Mammary epithelial cell (primary cell): ENCODE measurements at regions of chr14 and their contacts with region 1.

Region 1: GRCh38 chr14:64671591-64671990 is 32.6 kb upstream of the PLEKHG3 start:
- DNase-seq: peak; percentile 60
- H3K4me3 ChIP-seq: no peak overlapping the region
- H3K27ac ChIP-seq: no peak overlapping the region
- H3K4me1 ChIP-seq: peaks cover 27% of the 10 kb centered on the region
- H3K27me3 ChIP-seq: no peaks in the 10 kb centered on the region
- CTCF ChIP-seq: peak; percentile 72 to 82

Region 2: GRCh38 chr14:64708148-64709004 is 36.8 kb after region 1 on chr14:
- CTCF ChIA-PET with region 1: no interaction called
- dilution Hi-C with region 1: no loop called
- in situ Hi-C with region 1: no loop called
- intact Hi-C with region 1: loop called (anchors 5 kb)
- DNase-seq: peak; percentile 89
- H3K4me3 ChIP-seq: peak overlapping the region; percentile 23 to 39 (median 31)
- H3K27ac ChIP-seq: peak overlapping the region; percentile 86
- H3K4me1 ChIP-seq: peaks cover 47% of the 10 kb centered on the region
- H3K27me3 ChIP-seq: no peaks in the 10 kb centered on the region
- CTCF ChIP-seq: no peak

Region 3: GRCh38 chr14:64758691-64759584 is 87.3 kb after region 1 on chr14:
- CTCF ChIA-PET with region 1: no interaction called
- dilution Hi-C with region 1: loop called (anchors 5 kb)
- in situ Hi-C with region 1: loop called (anchors 5 kb)
- intact Hi-C with region 1: loop called (anchors 1 kb)
- DNase-seq: peak; percentile 82
- H3K4me3 ChIP-seq: no peak overlapping the region
- H3K27ac ChIP-seq: peak overlapping the region; percentile 68
- H3K4me1 ChIP-seq: peaks cover 78% of the 10 kb centered on the region
- H3K27me3 ChIP-seq: no peaks in the 10 kb centered on the region
- CTCF ChIP-seq: no peak

Region 4: DNA sequence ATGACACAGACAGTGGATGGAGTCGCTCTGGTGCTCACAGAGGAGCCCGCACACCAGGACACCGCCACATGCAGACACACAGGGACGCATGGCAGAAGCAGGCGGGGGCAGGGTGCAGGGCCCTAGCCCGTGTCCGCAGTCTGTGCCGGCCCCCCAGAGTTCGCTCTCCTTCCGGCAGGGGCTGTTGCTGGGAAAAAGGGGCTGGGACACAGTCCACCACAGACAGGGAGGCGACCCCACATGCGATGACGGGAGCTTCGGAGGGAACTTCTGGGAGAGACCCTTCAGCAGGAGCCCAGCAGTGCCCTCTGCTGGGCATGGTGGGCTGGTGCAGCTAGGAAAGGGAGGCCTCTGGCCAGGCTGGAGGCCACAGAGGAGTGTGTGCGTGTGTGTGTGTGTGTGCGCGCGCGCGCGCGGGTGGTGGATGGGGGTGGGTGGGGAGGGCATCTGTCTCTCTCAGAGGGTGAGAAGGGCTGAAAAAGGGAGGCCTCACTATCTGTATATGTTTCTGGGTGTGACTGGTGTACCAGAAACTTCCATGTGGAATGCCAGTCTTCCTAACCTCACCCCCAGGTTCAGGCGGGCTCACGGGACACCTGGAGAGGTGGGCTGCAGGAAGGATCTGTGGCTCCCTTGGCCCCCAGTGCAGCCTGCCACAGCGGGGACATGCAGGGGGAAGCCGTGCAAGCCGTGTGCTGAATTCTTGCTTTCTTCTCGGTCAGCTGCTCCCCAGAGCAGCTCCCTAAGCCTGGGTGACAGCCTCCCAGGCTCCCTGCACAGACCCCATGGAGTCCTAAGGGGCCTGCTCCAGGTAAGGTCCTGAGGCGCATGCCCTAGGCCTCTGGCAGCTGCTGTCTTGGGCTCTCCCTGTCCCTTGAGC is 93.3 kb after region 1 on chr14:
- CTCF ChIA-PET with region 1: no interaction called
- dilution Hi-C with region 1: no loop called
- in situ Hi-C with region 1: loop called in 1 of 2 experiments (anchors 5 kb)
- intact Hi-C with region 1: loop called (anchors 1 kb)
- DNase-seq: peak; percentile 61
- H3K4me3 ChIP-seq: no peak overlapping the region
- H3K27ac ChIP-seq: no peak overlapping the region
- H3K4me1 ChIP-seq: peaks cover 45% of the 10 kb centered on the region
- H3K27me3 ChIP-seq: no peaks in the 10 kb centered on the region
- CTCF ChIP-seq: peak; percentile 80 to 92

Region 5: GRCh38 chr14:64880221-64881121 is 208.9 kb after region 1 on chr14:
- CTCF ChIA-PET with region 1: no interaction called
- dilution Hi-C with region 1: no loop called
- in situ Hi-C with region 1: loop called (anchors 10 to 25 kb)
- intact Hi-C with region 1: no loop called
- DNase-seq: peak; percentile 9
- H3K4me3 ChIP-seq: peak overlapping the region; percentile 28 to 45 (median 31)
- H3K27ac ChIP-seq: no peak overlapping the region
- H3K4me1 ChIP-seq: peaks cover 12% of the 10 kb centered on the region
- H3K27me3 ChIP-seq: peaks cover 27% of the 10 kb centered on the region
- CTCF ChIP-seq: no peak

Region 6: GRCh38 chr14:64914237-64914971 is 242.8 kb after region 1 on chr14 and contains the start of gene CHURC1:
- CTCF ChIA-PET with region 1: no interaction called
- dilution Hi-C with region 1: loop called (anchors 25 kb)
- in situ Hi-C with region 1: no loop called
- intact Hi-C with region 1: no loop called
- DNase-seq: peak; percentile 98
- H3K4me3 ChIP-seq: peak within 1 kb of the TSS; percentile 80 to 89 (median 87)
- H3K27ac ChIP-seq: peak within 1 kb of the TSS; percentile 90
- H3K4me1 ChIP-seq: peaks cover 10% of the 10 kb centered on the region
- H3K27me3 ChIP-seq: no peaks in the 10 kb centered on the region
- CTCF ChIP-seq: no peak
- total RNA-seq, gene CHURC1: 49.9 to 55.7 TPM